Caco-2 (cell line): ENCODE measurements at regions of chr1 and their contacts with region 1.

Region 1: GRCh38 chr1:62746085-62746808 is 37.7 kb upstream of the ATG4C start:
- DNase-seq: no peak
- H3K4me3 ChIP-seq: no peak overlapping the region
- H3K4me3 Mint-ChIP-seq: no peak overlapping the region
- H3K27ac Mint-ChIP-seq: no peak overlapping the region
- H3K4me1 ChIP-seq: 0 out of 2 replicates have a peak, but pooled peaks cover 3% of the 10 kb centered on the region
- H3K4me1 Mint-ChIP-seq: no peaks in the 10 kb centered on the region
- H3K27me3 ChIP-seq: no peaks in the 10 kb centered on the region
- H3K27me3 Mint-ChIP-seq: no peaks in the 10 kb centered on the region
- CTCF ChIP-seq: peak; percentile 30 to 51

Region 2: DNA sequence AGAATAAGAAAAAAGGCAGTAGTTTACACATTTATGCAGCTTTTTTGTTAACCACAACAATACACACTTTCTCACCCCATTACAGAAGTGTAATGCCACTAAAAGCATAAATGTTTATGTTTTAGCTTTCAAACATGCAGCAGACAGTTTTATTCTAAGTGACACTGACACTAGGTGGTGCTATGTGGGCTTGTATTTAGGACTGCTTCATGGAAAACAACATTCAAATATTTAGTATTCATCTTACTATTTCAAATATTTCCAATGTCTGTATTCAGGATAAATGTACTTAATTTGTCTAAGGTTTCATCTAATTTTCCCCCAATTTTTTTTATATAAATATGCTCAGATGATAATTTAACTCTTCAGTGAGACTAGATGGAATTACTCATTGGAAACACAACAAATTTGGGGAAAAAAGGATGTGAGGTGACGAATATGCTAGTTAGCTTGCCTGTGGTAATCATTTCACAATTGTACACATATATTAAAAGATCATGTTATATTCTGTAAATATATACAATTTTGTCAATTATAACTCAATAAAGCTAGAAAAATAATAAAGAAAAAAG is 238.0 kb before region 1 on chr1:
- CTCF ChIA-PET with region 1: interaction called, 6 read pairs
- POLR2A ChIA-PET with region 1: no interaction called
- intact Hi-C with region 1: loop called (anchors 1 kb)
- DNase-seq: peak in 1 of 2 experiments; percentile 15
- H3K4me3 ChIP-seq: no peak overlapping the region
- H3K4me3 Mint-ChIP-seq: no peak overlapping the region
- H3K27ac Mint-ChIP-seq: no peak overlapping the region
- H3K4me1 ChIP-seq: no peaks in the 10 kb centered on the region
- H3K4me1 Mint-ChIP-seq: no peaks in the 10 kb centered on the region
- H3K27me3 ChIP-seq: no peaks in the 10 kb centered on the region
- H3K27me3 Mint-ChIP-seq: no peaks in the 10 kb centered on the region
- CTCF ChIP-seq: peak; percentile 41 to 57

Region 3: DNA sequence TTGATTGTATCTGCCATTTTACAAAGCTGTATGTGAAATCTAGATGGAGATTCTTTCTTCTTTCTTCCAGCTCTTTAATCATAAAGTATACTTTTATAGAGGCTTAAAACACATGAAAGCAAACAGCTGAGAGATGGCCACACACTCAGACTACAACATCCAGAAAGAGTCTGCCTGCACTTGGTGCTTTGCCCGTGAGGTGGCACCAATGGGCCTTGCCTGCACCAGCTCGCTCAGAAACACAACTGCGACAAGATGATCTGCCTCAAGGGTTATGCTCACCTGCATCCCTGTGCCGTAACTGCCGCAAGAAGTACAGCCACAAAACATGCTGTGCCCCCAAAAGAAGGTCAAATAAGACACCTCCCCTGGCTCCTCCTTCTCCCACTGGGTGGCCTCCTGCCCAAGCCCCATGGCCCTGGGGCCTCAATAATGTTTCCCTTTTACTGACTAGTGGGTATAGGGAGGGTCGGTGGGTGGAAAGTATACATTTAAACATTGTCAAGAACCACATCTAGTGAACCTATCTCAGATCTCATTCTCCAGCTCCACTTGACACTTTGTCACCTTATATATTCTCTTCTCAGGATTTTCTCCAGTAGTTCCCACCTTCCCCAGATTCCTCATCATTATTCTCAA is 215.6 kb before region 1 on chr1:
- CTCF ChIA-PET with region 1: interaction called, 7 read pairs
- POLR2A ChIA-PET with region 1: no interaction called
- intact Hi-C with region 1: loop called (anchors 1 kb)
- DNase-seq: peak; percentile 42 to 44
- H3K4me3 ChIP-seq: no peak overlapping the region
- H3K4me3 Mint-ChIP-seq: no peak overlapping the region
- H3K27ac Mint-ChIP-seq: peak overlapping the region; percentile 26
- H3K4me1 ChIP-seq: no peaks in the 10 kb centered on the region
- H3K4me1 Mint-ChIP-seq: peaks cover 6% of the 10 kb centered on the region
- H3K27me3 ChIP-seq: no peaks in the 10 kb centered on the region
- H3K27me3 Mint-ChIP-seq: no peaks in the 10 kb centered on the region
- CTCF ChIP-seq: peak; percentile 23 to 61